ENCODE measurements at regions of chr18 and their contacts with region 1.

Region 1: GRCh38 chr18:12947355-12948041 is at the start of gene SEH1L:
- DNase-seq: peak; percentile 97 to 98 (median 98)
- H3K4me3 ChIP-seq: peak within 1 kb of the TSS; percentile 79 to 89
- H3K4me3 Mint-ChIP-seq: peak within 1 kb of the TSS; percentile 92 to 98 (median 96)
- H3K27ac ChIP-seq: peak within 1 kb of the TSS; percentile 90
- H3K27ac Mint-ChIP-seq: peak within 1 kb of the TSS; percentile 86 to 99 (median 98)
- H3K4me1 ChIP-seq: peaks cover 36% of the 10 kb centered on the region
- H3K4me1 Mint-ChIP-seq: peaks cover 20 to 40% (median 31%) of the 10 kb centered on the region in 4 donors
- H3K27me3 ChIP-seq: no peaks in the 10 kb centered on the region
- H3K27me3 Mint-ChIP-seq: no peaks in the 10 kb centered on the region
- total RNA-seq, gene SEH1L: 28.9 to 31.3 TPM

Region 2: GRCh38 chr18:11908182-11909060 is 1039.1 kb before region 1 on chr18 and contains the start of gene MPPE1:
- CTCF ChIA-PET with region 1: no interaction called
- POLR2A ChIA-PET with region 1: no interaction called
- intact Hi-C with region 1: loop called (anchors 10 kb)
- DNase-seq: peak; percentile 82 to 87 (median 83)
- H3K4me3 ChIP-seq: peak within 1 kb of the TSS; percentile 86 to 93
- H3K4me3 Mint-ChIP-seq: peak within 1 kb of the TSS; percentile 94 to 96 (median 96)
- H3K27ac ChIP-seq: peak within 1 kb of the TSS; percentile 93
- H3K27ac Mint-ChIP-seq: peak within 1 kb of the TSS; percentile 89 to 98 (median 96)
- H3K4me1 ChIP-seq: peaks cover 20% of the 10 kb centered on the region
- H3K4me1 Mint-ChIP-seq: peaks cover 11 to 37% (median 21%) of the 10 kb centered on the region in 4 donors
- H3K27me3 ChIP-seq: no peaks in the 10 kb centered on the region
- H3K27me3 Mint-ChIP-seq: no peaks in the 10 kb centered on the region
- total RNA-seq, gene MPPE1: 75.3 to 79.7 TPM

Region 3: GRCh38 chr18:12921178-12921577 is 26.3 kb before region 1 on chr18:
- CTCF ChIA-PET with region 1: interaction called, 3 read pairs
- POLR2A ChIA-PET with region 1: interaction called, 12 read pairs
- intact Hi-C with region 1: no loop called
- DNase-seq: peak; percentile 22 to 50 (median 42)
- H3K4me3 ChIP-seq: peak overlapping the region in 1 of 2 donors; percentile 17
- H3K4me3 Mint-ChIP-seq: peak overlapping the region; percentile 60 to 75 (median 71)
- H3K27ac ChIP-seq: no peak overlapping the region
- H3K27ac Mint-ChIP-seq: peak overlapping the region; percentile 44 to 85 (median 62)
- H3K4me1 ChIP-seq: peaks cover 17% of the 10 kb centered on the region
- H3K4me1 Mint-ChIP-seq: peaks cover 13 to 24% (median 19%) of the 10 kb centered on the region in 4 donors
- H3K27me3 ChIP-seq: no peaks in the 10 kb centered on the region
- H3K27me3 Mint-ChIP-seq: no peaks in the 10 kb centered on the region

Region 4: GRCh38 chr18:13137670-13138419 is 190.3 kb after region 1 on chr18:
- CTCF ChIA-PET with region 1: no interaction called
- POLR2A ChIA-PET with region 1: interaction called, 8 read pairs
- intact Hi-C with region 1: loop called (anchors 1 kb)
- DNase-seq: peak; percentile 77 to 86 (median 81)
- H3K4me3 ChIP-seq: peak overlapping the region; percentile 69 to 92
- H3K4me3 Mint-ChIP-seq: peak overlapping the region; percentile 90 to 100 (median 97)
- H3K27ac ChIP-seq: peak overlapping the region; percentile 54
- H3K27ac Mint-ChIP-seq: peak overlapping the region; percentile 93 to 99 (median 96)
- H3K4me1 ChIP-seq: peaks cover 19% of the 10 kb centered on the region
- H3K4me1 Mint-ChIP-seq: peaks cover 19 to 29% (median 24%) of the 10 kb centered on the region in 4 donors
- H3K27me3 ChIP-seq: no peaks in the 10 kb centered on the region
- H3K27me3 Mint-ChIP-seq: no peaks in the 10 kb centered on the region

Region 5: DNA sequence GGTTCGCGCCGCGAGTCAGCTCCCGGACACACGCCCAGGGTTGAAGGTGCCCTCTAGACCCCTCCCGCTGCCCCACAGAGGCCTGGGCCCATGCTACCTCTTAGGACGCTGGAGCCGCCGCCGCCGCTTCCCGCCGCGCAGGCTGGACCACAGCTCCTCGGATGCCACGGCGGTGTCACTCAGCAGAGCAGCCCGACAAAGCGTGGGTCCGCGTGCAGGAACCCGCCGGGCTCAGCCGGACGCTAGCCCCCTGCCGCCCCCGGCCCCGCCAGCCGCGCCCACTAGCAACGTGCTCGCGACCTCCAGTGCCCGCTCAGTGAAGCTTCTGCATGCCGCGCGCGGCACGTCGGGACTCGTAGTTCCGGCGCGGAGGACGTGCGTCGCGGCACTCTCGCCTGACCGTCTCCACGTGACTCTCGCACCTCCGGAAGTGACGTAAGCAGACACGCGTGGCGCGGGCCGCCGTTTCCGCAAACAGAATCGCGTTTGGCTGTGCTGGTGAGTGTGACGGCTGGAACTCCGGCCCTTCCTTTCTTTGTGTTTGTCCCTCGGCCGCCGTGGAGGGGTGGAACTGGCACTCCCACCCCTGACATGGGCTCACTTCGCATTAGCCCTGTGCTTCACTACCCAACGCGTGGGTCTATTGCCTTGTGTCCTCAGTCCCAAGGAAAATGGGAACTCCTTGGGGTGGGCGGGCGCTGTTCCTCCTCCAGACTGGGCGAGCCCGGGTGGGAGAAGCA is 778.9 kb after region 1 on chr18 and contains the starts of genes FAM210A and RNMT:
- CTCF ChIA-PET with region 1: no interaction called
- POLR2A ChIA-PET with region 1: interaction called, 3 read pairs
- intact Hi-C with region 1: loop called (anchors 1 kb)
- DNase-seq: peak; percentile 90 to 95 (median 92)
- H3K4me3 ChIP-seq: peak within 1 kb of the TSS; percentile 76 to 78
- H3K4me3 Mint-ChIP-seq: peak within 1 kb of the TSS; percentile 87 to 97 (median 92)
- H3K27ac ChIP-seq: peak within 1 kb of the TSS; percentile 96
- H3K27ac Mint-ChIP-seq: peak within 1 kb of the TSS; percentile 85 to 98 (median 97)
- H3K4me1 ChIP-seq: peaks cover 49% of the 10 kb centered on the region
- H3K4me1 Mint-ChIP-seq: peaks cover 41 to 67% (median 51%) of the 10 kb centered on the region in 4 donors
- H3K27me3 ChIP-seq: no peaks in the 10 kb centered on the region
- H3K27me3 Mint-ChIP-seq: no peaks in the 10 kb centered on the region
- total RNA-seq, gene FAM210A: 9.4 to 10.2 TPM
- total RNA-seq, gene RNMT: 53.7 to 55.0 TPM